ENCODE measurements at regions of chr15 and their contacts with region 1.

Region 1: DNA sequence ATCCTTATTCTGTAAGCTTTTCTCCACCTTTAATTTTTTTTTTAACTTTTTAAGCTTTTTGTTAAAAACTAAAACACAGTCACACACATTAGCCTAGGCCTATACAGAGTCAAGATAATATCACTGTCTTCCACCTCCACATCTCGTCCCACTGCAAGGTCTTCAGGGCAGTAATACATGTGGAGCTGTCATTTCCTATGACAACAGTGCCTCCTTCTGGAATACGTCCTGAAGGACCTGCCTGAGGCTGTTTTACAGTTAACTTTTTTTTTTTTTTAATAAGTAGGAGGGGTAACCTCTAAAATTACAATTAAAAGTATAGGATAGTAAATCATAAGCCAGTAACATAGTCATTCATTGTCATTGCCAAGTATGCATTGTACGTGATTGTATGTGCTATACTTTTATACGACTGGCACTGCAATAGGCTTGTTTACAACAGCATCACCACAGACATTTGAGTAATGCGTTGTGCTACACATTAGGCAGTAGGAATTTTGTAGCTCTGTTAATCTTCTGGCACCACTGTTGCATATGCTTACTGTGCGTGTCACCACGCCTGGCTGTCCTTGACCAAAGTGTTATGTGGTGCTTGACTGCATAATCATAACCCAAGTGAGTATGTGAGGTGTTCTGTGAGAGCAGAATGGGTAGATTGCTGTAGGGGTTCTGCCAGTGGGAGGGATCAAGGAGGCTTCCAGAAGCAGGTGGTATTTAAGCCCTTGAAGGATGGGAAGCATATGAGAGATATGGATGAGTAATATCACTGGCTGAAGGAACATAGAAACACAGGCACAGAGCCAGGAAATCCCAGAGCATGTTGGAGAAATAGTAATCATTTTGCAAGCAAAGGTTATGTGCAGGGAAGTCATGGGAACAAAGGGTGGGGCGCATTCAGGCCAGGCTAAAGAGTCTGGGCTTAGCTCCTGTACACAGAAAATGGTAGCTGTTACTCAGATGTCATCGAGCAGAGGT is 18.3 kb downstream of the FBXO22 start:
- H3K4me3 ChIP-seq: no peak overlapping the region
- H3K27ac ChIP-seq: no peak overlapping the region
- H3K4me1 ChIP-seq: no peaks in the 10 kb centered on the region
- CTCF ChIP-seq: no peak

Region 2: DNA sequence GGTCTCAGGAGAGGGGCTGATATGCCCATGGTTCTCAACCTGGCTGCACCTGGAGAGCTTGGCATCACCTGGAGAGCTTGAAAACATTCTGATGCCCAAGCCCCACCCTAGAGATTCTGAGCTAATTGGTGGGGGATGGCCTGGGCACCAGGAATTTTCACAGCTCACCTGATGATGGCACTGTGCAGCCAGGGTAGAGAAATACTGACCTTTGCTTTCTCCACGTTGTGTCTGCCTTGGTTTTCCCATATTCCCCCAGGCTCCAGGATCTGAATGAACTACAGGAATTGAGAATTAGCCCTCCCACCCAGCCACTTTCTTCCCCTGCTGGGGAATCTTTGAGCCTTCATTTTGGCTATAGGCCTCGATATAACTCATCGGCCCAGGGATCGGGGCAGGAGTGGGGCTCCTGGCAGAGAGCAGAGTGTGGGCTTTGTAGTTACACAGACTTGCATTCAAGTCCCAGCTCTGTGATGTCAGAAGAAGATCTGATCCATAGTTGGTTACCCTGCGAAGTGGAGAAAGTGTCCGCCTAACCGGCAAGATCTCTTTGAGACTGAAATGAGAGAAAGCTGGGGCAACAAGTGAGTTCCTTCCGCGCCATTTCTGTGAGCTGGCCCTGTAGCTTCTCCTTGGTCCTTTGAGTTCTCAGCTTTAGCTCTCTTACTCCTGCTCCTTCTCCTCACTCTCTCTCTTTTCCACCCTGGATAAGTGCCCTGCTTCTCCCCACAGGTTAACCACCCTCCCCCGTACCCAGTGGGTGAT is 111.8 kb before region 1 on chr15:
- CTCF ChIA-PET with region 1: interaction called, 51 read pairs
- POLR2A ChIA-PET with region 1: interaction called, 4 read pairs
- H3K4me3 ChIP-seq: no peak overlapping the region
- H3K27ac ChIP-seq: no peak overlapping the region
- H3K4me1 ChIP-seq: no peaks in the 10 kb centered on the region
- CTCF ChIP-seq: peak; percentile 42; the same call in 1 of the 2 replicates

Region 3: DNA sequence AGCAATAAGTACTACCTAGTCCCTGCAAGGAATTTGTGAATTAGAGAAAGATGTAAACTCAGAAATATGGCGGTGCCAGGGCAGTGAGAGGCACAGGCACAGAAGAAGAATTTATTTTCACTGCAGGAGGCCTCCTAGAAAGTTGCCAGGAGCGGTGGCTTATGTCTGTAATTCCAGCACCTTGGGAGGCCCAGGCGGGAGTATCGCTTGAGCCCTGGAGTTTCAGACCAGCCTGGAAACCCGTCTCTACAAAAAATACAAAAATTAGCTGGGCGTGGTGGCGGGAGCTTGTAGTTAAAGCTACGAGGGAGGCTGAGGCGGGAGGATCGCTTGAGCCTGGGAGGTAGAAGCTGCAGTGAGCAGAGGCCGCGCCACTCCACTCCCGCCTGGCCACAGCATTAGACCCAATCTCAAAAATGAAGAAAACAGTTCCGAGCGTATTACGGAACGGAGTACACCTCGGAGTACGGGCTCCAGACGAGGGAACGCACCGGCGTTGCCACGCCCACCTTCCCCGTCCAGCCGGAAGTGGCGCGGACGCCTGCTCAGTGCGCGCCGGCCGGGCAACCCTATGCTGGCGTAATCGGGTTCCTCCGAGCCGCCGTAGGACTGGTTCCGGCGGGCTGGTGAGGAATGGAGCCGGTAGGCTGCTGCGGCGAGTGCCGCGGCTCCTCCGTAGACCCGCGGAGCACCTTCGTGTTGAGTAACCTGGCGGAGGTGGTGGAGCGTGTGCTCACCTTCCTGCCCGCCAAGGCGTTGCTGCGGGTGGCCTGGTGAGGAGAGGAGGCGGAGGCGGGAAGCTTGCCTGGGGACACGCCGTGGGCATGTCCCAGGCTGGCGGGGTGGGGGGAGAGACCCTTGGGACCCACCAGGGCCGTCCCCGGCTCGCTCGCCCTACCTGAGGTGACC is 18.4 kb before region 1 on chr15 and contains the start of gene FBXO22:
- CTCF ChIA-PET with region 1: interaction called, 21 read pairs
- POLR2A ChIA-PET with region 1: interaction called, 5 read pairs
- H3K4me3 ChIP-seq: peak within 1 kb of the TSS; percentile 98
- H3K27ac ChIP-seq: peak within 1 kb of the TSS; percentile 99
- H3K4me1 ChIP-seq: peaks cover 19% of the 10 kb centered on the region
- CTCF ChIP-seq: no peak

Region 4: DNA sequence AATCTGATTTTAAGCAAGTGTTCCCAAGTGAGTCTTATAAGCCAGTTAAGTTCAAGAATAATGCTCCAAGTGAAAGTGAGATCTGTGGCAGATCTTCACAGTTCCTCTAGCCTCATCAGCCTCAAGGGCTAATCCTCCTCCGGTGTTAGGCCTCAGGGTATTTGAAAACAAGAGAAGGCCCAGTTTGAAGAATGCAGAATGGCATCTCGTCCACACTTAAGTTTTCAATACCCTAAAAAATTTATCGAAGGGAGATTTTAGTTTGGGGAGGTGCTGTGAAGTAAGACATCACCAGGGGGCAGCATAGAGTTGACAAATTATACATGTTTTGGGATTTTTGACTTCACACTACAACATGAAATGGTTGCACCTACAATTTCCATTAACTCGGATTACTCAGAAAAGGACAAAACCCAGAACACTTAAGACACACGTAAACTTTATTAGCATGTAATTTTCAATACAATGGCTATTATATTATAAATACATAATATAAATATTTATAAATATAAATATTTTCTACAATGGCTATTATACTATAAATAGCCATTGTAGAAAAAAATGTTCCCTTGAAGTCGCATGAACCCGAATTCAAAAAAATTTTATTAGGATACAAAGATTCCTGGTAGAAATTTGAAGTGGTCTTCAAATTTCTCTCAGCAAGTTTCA is 135.4 kb after region 1 on chr15:
- CTCF ChIA-PET with region 1: interaction called, 12 read pairs
- POLR2A ChIA-PET with region 1: no interaction called
- H3K4me3 ChIP-seq: peak overlapping the region; percentile 16
- H3K27ac ChIP-seq: no peak overlapping the region
- H3K4me1 ChIP-seq: no peaks in the 10 kb centered on the region
- CTCF ChIP-seq: no peak

Measured in HEK293 (cell line).